B cell (primary cell): ENCODE measurements at regions of chr1 and their contacts with region 1.

Region 1: DNA sequence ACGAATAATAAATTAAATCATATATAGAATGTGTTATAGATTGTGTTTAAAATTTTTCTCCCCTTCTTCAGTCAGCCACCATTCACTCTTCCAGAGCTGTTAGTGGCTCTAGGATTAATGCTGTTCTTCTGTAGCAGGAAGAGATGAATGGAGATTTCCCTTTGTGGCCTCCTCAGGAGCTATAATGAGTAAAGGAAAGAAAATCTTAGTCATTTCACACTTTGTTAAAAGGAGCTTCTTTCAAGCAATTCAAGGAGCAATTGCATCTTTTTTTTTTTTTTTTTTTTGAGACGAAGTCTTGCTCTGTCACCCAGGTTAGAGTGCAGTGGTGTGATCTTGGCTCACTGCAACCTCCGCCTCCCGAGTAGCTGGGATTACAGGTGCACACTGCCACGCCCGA is 23.7 kb upstream of the TMCO2 start:
- DNase-seq: no peak
- ATAC-seq: no peak
- H3K4me3 ChIP-seq: no peak overlapping the region
- H3K4me3 Mint-ChIP-seq: no peak overlapping the region
- H3K27ac ChIP-seq: no peak overlapping the region
- H3K27ac Mint-ChIP-seq: no peak overlapping the region
- H3K4me1 ChIP-seq: no peaks in the 10 kb centered on the region
- H3K4me1 Mint-ChIP-seq: no peaks in the 10 kb centered on the region
- H3K27me3 ChIP-seq: no peaks in the 10 kb centered on the region
- H3K27me3 Mint-ChIP-seq: no peaks in the 10 kb centered on the region
- CTCF ChIP-seq: no peak

Region 2: DNA sequence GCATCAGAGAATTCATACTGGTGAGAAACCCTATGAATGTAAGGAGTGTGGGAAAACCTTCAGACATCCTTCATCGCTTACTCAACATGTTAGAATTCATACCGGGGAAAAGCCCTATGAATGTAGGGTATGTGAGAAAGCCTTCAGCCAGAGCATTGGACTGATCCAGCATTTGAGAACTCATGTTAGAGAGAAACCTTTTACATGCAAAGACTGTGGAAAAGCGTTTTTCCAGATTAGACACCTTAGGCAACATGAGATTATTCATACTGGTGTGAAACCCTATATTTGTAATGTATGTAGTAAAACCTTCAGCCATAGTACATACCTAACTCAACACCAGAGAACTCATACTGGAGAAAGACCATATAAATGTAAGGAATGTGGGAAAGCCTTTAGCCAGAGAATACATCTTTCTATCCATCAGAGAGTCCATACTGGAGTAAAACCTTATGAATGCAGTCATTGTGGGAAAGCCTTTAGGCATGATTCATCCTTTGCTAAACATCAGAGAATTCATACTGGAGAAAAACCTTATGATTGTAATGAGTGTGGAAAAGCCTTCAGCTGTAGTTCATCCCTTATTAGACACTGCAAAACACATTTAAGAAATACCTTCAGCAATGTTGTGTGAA is 239.0 kb after region 1 on chr1:
- CTCF ChIA-PET with region 1: no interaction called
- POLR2A ChIA-PET with region 1: interaction called, 10 read pairs
- intact Hi-C with region 1: no loop called
- DNase-seq: peak; percentile 29
- ATAC-seq: no peak
- H3K4me3 ChIP-seq: no peak overlapping the region
- H3K4me3 Mint-ChIP-seq: no peak overlapping the region
- H3K27ac ChIP-seq: no peak overlapping the region
- H3K27ac Mint-ChIP-seq: no peak overlapping the region
- H3K4me1 ChIP-seq: no peaks in the 10 kb centered on the region
- H3K4me1 Mint-ChIP-seq: no peaks in the 10 kb centered on the region
- H3K27me3 ChIP-seq: no peaks in the 10 kb centered on the region
- H3K27me3 Mint-ChIP-seq: no peaks in the 10 kb centered on the region
- CTCF ChIP-seq: no peak